ENCODE measurements at regions of chr1 and their contacts with region 1.

Region 1: GRCh38 chr1:78333502-78333901 is 157.3 kb upstream of the PTGFR start:
- DNase-seq: peak; percentile 12
- ATAC-seq: peak; percentile 47
- H3K4me3 Mint-ChIP-seq: no peak overlapping the region
- H3K27ac Mint-ChIP-seq: no peak overlapping the region
- H3K4me1 Mint-ChIP-seq: no peaks in the 10 kb centered on the region
- H3K27me3 Mint-ChIP-seq: peaks cover 9% of the 10 kb centered on the region

Region 2: GRCh38 chr1:78126506-78126905 is 207.0 kb before region 1 on chr1:
- CTCF ChIA-PET with region 1: interaction called, 11 read pairs
- POLR2A ChIA-PET with region 1: no interaction called
- intact Hi-C with region 1: no loop called
- DNase-seq: no peak
- ATAC-seq: no peak
- H3K4me3 Mint-ChIP-seq: no peak overlapping the region
- H3K27ac Mint-ChIP-seq: no peak overlapping the region
- H3K4me1 Mint-ChIP-seq: no peaks in the 10 kb centered on the region
- H3K27me3 Mint-ChIP-seq: no peaks in the 10 kb centered on the region

Region 3: DNA sequence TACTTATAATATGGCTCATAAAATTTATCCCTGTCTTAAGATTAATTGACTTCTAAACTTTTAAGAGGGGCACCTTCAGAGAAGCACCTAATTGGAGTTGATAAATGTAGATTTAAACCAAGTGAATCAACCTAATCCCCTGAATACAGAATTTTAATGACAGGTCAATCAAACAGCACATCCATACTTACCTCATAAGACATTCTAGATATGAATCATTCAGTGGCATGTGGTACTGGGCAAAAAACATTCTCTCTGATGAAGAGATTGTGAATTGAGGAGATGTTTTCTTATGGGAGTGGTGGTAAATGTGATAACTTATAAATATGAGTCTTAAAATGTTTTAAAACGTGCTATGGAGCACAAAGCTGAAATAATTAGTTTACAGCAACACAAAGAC is 10.2 kb before region 1 on chr1:
- CTCF ChIA-PET with region 1: interaction called, 15 read pairs
- POLR2A ChIA-PET with region 1: no interaction called
- intact Hi-C with region 1: no loop called
- DNase-seq: no peak
- ATAC-seq: no peak
- H3K4me3 Mint-ChIP-seq: no peak overlapping the region
- H3K27ac Mint-ChIP-seq: no peak overlapping the region
- H3K4me1 Mint-ChIP-seq: no peaks in the 10 kb centered on the region
- H3K27me3 Mint-ChIP-seq: peaks cover 3% of the 10 kb centered on the region

Region 4: GRCh38 chr1:78676347-78676982 is 343.0 kb after region 1 on chr1:
- CTCF ChIA-PET with region 1: interaction called, 4 read pairs
- POLR2A ChIA-PET with region 1: no interaction called
- intact Hi-C with region 1: loop called in 1 of 2 experiments (anchors 10 kb)
- DNase-seq: peak; percentile 72
- ATAC-seq: no peak
- H3K4me3 Mint-ChIP-seq: no peak overlapping the region
- H3K27ac Mint-ChIP-seq: no peak overlapping the region
- H3K4me1 Mint-ChIP-seq: peaks cover 7% of the 10 kb centered on the region
- H3K27me3 Mint-ChIP-seq: peaks cover 2% of the 10 kb centered on the region

Measured in activated CD4-positive, alpha-beta T cell treated with anti-CD3 and anti-CD28 coated beads for 36 hours (primary cell).